ENCODE measurements at regions of chr12 and their contacts with region 1.

Region 1: DNA sequence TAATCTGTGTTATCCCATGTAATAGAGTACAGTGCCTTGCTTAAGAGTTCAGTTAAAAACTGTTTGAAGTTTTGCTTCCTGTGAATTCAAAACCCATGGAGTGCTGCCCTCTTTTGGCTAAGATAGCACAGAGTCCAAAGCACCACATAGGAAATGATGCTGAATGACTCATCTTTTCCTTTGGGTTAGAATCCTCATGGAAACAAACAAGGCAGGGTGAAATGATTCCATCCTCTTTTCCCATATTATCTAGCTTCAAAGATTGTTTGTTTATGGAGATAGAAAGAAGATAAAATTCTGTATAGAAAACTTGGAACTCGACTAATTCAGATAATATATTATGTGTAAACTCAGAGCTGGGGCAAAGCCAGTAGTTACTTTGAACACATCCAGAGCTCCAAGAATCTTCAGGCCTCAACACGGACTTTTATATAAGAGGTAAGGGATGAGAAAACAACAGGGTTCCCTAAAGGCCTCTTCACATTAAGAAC is 87.4 kb downstream of the OTOGL start:
- DNase-seq: peak in 7 of 9 donors; percentile 5 to 40 (median 25)
- ATAC-seq: peak; percentile 76
- H3K4me3 ChIP-seq: no peak overlapping the region
- H3K4me3 Mint-ChIP-seq: no peak overlapping the region
- H3K27ac ChIP-seq: no peak overlapping the region
- H3K27ac Mint-ChIP-seq: no peak overlapping the region
- H3K4me1 ChIP-seq: no peaks in the 10 kb centered on the region
- H3K4me1 Mint-ChIP-seq: peaks cover 0 to 13% (median 0%) of the 10 kb centered on the region in 7 donors
- H3K27me3 ChIP-seq: no peaks in the 10 kb centered on the region
- H3K27me3 Mint-ChIP-seq: peaks cover 0 to 11% (median 2%) of the 10 kb centered on the region in 5 donors

Region 2: DNA sequence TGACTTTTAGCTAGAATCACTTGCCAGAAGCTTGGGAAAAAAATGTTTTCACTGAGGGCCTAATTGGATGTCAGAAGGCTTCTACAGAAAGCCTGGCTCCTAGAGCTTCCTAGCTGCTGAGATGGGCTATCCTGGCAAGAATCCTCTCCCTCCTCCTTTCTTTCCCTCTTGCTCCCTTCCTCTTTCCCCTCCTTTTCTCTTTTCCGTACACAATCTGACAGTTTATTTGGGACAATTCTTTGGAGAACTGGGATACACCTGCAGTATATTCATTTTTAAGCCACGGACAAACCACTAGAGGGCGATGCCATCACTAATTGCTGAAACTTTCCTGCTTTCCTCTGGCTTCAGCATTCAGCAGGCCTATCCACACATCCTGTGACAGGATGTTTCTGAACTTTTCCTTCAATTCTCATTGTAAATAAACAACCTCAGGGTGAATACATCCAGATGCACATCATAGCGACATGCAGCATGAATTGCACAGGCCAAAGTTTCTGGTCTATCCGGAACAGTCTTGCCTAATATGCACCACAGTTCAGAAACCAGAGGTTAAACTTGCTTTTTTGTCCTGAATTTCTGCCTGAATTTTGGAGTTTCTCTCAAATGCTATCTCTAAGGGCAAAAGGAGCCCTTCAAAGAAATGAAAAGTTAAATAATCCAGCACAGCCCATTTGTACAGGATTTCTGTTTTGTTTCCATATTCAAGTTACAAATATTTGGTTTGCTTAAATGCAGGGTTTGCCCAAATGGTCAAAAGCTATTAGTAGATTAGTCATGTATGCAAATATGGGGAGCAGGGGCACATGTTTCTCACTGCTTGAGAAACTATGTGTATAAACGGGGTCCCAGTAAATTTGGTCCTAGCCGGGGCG is 638.8 kb before region 1 on chr12:
- CTCF ChIA-PET with region 1: no interaction called
- POLR2A ChIA-PET with region 1: no interaction called
- intact Hi-C with region 1: loop called (anchors 1 to 2 kb)
- DNase-seq: peak in 2 of 9 donors; percentile 7 to 10
- ATAC-seq: no peak
- H3K4me3 ChIP-seq: no peak overlapping the region
- H3K4me3 Mint-ChIP-seq: no peak overlapping the region
- H3K27ac ChIP-seq: no peak overlapping the region
- H3K27ac Mint-ChIP-seq: no peak overlapping the region
- H3K4me1 ChIP-seq: no peaks in the 10 kb centered on the region
- H3K4me1 Mint-ChIP-seq: no peaks in the 10 kb centered on the region
- H3K27me3 ChIP-seq: no peaks in the 10 kb centered on the region
- H3K27me3 Mint-ChIP-seq: peaks cover 0 to 11% (median 0%) of the 10 kb centered on the region in 5 donors

Region 3: DNA sequence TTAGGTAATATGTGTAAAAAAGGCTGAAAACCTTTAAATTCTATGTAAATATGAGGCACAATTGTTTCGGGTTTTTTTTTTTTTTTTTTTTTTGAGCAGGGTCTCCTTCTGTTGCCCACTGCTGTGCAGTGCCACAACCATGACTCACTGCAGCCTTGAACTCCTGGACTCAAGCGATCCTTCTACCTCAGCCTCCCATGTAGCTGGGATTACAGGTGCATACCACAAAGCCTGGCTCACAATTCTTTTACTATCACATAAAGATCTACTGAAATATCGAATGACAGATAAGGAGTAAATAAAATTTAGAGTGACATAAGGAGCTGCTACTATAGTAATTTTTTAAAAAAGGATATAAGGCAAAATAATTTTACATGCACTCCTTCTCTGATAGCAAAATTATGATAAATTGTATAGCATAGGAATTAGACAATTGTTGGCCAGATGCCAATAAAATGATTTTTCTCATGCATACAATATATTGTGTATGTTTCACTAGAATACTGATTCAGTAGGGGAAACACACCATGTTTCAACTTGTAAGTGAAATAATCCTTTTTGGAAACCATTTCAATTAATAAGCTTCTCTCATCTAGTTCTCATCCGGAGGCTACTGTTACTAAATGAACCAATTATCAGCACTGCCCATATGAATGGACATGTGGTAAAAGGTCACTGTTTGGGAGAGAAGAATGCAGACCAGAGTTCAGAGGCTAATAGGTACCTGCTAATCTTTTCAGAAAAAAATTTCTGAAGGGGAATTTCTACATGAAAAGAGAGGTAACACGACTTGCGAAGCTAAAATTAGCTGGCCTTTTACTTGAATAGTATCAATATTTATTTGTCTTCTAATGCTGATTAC is 360.3 kb before region 1 on chr12:
- CTCF ChIA-PET with region 1: interaction called, 3 read pairs
- POLR2A ChIA-PET with region 1: no interaction called
- intact Hi-C with region 1: loop called in 1 of 2 experiments (anchors 10 kb)
- DNase-seq: no peak
- ATAC-seq: no peak
- H3K4me3 ChIP-seq: no peak overlapping the region
- H3K4me3 Mint-ChIP-seq: no peak overlapping the region
- H3K27ac ChIP-seq: no peak overlapping the region
- H3K27ac Mint-ChIP-seq: peak overlapping the region in 1 of 9 donors; percentile 59
- H3K4me1 ChIP-seq: peaks cover 0 to 12% of the 10 kb centered on the region in 2 donors
- H3K4me1 Mint-ChIP-seq: peaks cover 15 to 55% (median 27%) of the 10 kb centered on the region in 7 donors
- H3K27me3 ChIP-seq: no peaks in the 10 kb centered on the region
- H3K27me3 Mint-ChIP-seq: no peaks in the 10 kb centered on the region

Region 4: DNA sequence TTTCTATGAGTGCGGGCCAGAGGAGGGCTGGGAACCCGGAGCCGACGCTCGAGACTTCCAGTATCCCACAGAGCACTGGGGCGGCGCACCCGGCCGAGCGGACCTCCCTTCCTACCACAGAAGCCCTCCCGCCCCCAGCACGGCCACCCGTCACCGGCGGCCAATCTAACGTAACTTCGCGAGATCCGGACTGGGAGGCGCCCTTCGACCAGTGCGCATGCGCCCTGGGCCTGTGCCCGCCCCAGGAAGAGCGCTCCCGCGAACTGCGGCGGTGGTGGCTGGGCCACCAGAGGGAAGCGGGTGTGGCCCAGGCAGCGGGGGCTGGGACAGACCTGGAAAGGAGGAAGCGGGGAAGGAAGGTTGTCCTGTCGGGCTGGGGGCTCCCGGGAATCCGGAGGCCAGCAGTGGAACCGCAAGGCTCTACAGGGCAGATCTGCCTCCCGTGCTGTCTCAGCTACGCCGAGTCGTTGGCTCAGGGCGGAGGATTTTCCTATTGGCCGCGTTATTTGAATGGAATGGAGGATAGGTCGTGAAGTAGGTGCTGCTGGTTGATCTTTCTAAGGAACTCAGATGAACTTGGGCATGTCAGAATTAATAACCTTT is 251.7 kb before region 1 on chr12 and contains the start of gene PPP1R12A:
- CTCF ChIA-PET with region 1: interaction called, 3 read pairs
- POLR2A ChIA-PET with region 1: interaction called, 4 read pairs
- intact Hi-C with region 1: loop called in 1 of 2 experiments (anchors 2 kb)
- DNase-seq: peak; percentile 92 to 97 (median 94)
- ATAC-seq: peak; percentile 92
- H3K4me3 ChIP-seq: peak within 1 kb of the TSS; percentile 89
- H3K4me3 Mint-ChIP-seq: peak within 1 kb of the TSS; percentile 88 to 100 (median 94)
- H3K27ac ChIP-seq: peak within 1 kb of the TSS; percentile 85
- H3K27ac Mint-ChIP-seq: peak within 1 kb of the TSS; percentile 80 to 99 (median 93)
- H3K4me1 ChIP-seq: peaks cover 6 to 17% of the 10 kb centered on the region in 2 donors
- H3K4me1 Mint-ChIP-seq: peaks cover 34 to 53% (median 47%) of the 10 kb centered on the region in 7 donors
- H3K27me3 ChIP-seq: no peaks in the 10 kb centered on the region
- H3K27me3 Mint-ChIP-seq: peaks cover 0 to 2% (median 0%) of the 10 kb centered on the region in 5 donors
- total RNA-seq, gene PPP1R12A: 72.7 to 111 (median 103) TPM

Region 5: GRCh38 chr12:80087486-80088213 is 99.1 kb before region 1 on chr12:
- CTCF ChIA-PET with region 1: interaction called, 3 read pairs
- POLR2A ChIA-PET with region 1: no interaction called
- intact Hi-C with region 1: loop called in 1 of 2 experiments (anchors 10 kb)
- DNase-seq: no peak
- ATAC-seq: no peak
- H3K4me3 ChIP-seq: no peak overlapping the region
- H3K4me3 Mint-ChIP-seq: no peak overlapping the region
- H3K27ac ChIP-seq: no peak overlapping the region
- H3K27ac Mint-ChIP-seq: no peak overlapping the region
- H3K4me1 ChIP-seq: peaks cover 5 to 15% of the 10 kb centered on the region in 2 donors
- H3K4me1 Mint-ChIP-seq: peaks cover 6 to 22% (median 19%) of the 10 kb centered on the region in 7 donors
- H3K27me3 ChIP-seq: no peaks in the 10 kb centered on the region
- H3K27me3 Mint-ChIP-seq: peaks cover 0 to 11% (median 0%) of the 10 kb centered on the region in 5 donors

Region 6: DNA sequence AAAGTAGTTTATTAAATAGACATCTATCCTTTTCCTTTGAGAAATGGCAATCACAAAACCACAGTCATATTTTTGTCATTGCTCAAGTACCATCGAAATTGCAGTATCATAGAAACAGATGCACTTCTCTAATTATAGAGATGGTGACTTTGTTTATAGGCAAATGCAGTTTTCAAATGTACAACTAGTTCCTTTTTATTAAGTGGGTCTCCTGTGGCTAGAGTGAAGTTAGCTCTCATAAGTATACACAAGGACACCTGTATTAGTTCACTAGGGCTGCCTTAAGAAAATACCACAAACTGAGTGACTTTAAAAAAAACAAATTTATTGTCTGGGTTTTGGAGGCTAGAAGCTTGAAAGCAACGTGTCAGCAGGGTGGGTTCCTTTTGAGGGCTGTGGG is 24.6 kb before region 1 on chr12:
- CTCF ChIA-PET with region 1: no interaction called
- POLR2A ChIA-PET with region 1: no interaction called
- intact Hi-C with region 1: no loop called
- DNase-seq: no peak
- ATAC-seq: no peak
- H3K4me3 ChIP-seq: no peak overlapping the region
- H3K4me3 Mint-ChIP-seq: no peak overlapping the region
- H3K27ac ChIP-seq: no peak overlapping the region
- H3K27ac Mint-ChIP-seq: no peak overlapping the region
- H3K4me1 ChIP-seq: no peaks in the 10 kb centered on the region
- H3K4me1 Mint-ChIP-seq: peaks cover 0 to 2% (median 0%) of the 10 kb centered on the region in 7 donors
- H3K27me3 ChIP-seq: no peaks in the 10 kb centered on the region
- H3K27me3 Mint-ChIP-seq: peaks cover 6 to 36% (median 15%) of the 10 kb centered on the region in 5 donors

Region 7: DNA sequence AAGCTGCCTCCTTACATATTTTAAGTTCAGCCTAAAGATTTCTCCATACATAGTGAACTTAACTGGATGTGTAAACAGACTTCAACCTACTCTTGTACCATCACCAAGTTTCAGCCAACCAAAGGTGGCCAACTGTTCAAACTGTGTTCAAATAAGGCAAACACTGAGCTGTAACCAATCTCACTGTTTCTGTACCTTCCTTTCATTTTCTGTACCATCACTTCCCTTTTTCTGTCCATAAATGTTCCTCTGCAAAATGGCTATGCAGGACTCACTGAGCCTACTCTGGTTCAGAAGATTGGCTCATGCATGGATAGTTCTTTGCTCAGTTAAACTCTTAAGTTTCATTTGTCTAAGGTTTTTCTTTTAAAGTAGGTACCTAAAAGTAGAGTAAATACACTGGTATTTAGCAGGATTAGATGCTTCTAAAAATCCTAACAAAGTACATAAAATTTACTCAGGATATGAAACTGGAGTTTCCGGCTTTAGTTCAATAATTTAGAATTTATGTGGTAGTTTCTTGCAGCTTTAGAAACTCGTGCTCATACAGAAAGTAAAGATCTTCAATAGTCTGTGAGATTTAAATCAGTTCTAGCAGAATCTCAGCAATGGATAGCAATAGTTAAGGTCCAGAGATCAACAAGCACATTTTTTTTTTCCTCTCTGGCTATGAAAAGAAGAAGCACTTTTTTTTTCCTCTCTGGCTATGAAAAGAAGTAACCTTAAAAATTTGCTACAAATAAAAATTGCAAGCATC is 1854.4 kb after region 1 on chr12:
- CTCF ChIA-PET with region 1: no interaction called
- POLR2A ChIA-PET with region 1: no interaction called
- intact Hi-C with region 1: no loop called
- DNase-seq: no peak
- ATAC-seq: no peak
- H3K4me3 ChIP-seq: no peak overlapping the region
- H3K4me3 Mint-ChIP-seq: no peak overlapping the region
- H3K27ac ChIP-seq: no peak overlapping the region
- H3K27ac Mint-ChIP-seq: no peak overlapping the region
- H3K4me1 ChIP-seq: no peaks in the 10 kb centered on the region
- H3K4me1 Mint-ChIP-seq: no peaks in the 10 kb centered on the region
- H3K27me3 ChIP-seq: no peaks in the 10 kb centered on the region
- H3K27me3 Mint-ChIP-seq: peaks cover 2 to 26% (median 14%) of the 10 kb centered on the region in 5 donors

Measured in naive thymus-derived CD4-positive, alpha-beta T cell (primary cell).